Endothelial cell of umbilical vein (primary cell): ENCODE measurements at regions of chr7 and their contacts with region 1.

Region 1: GRCh38 chr7:66493235-66494181 is 135.2 kb upstream of the KCTD7 start:
- DNase-seq: peak; percentile 98
- H3K4me3 ChIP-seq: peak overlapping the region; percentile 19 to 69 (median 60)
- H3K27ac ChIP-seq: peak overlapping the region; percentile 78
- H3K4me1 ChIP-seq: peaks cover 4% of the 10 kb centered on the region
- H3K27me3 ChIP-seq: no peaks in the 10 kb centered on the region
- CTCF ChIP-seq: peak in 1 of 2 donors; percentile 43
- POLR2A ChIP-seq: peak; percentile 97

Region 2: GRCh38 chr7:66075590-66076461 is 417.7 kb before region 1 on chr7 and contains the start of gene ASL:
- CTCF ChIA-PET with region 1: no interaction called
- POLR2A ChIA-PET with region 1: no interaction called
- dilution Hi-C with region 1: no loop called
- intact Hi-C with region 1: loop called (anchors 1 kb)
- DNase-seq: peak; percentile 93
- H3K4me3 ChIP-seq: peak within 1 kb of the TSS; percentile 59 to 88 (median 75)
- H3K27ac ChIP-seq: peak within 1 kb of the TSS; percentile 61
- H3K4me1 ChIP-seq: peaks cover 11% of the 10 kb centered on the region
- H3K27me3 ChIP-seq: no peaks in the 10 kb centered on the region
- CTCF ChIP-seq: no peak
- POLR2A ChIP-seq: peak; percentile 86
- total RNA-seq, gene ASL: 48.4 and 50.5 TPM in 2 replicates

Region 3: GRCh38 chr7:66114793-66115649 is 378.5 kb before region 1 on chr7 and contains the start of gene CRCP:
- CTCF ChIA-PET with region 1: no interaction called
- POLR2A ChIA-PET with region 1: no interaction called
- dilution Hi-C with region 1: no loop called
- intact Hi-C with region 1: loop called (anchors 10 kb)
- DNase-seq: peak; percentile 84
- H3K4me3 ChIP-seq: peak within 1 kb of the TSS; percentile 74 to 88 (median 87)
- H3K27ac ChIP-seq: peak within 1 kb of the TSS; percentile 73
- H3K4me1 ChIP-seq: peaks cover 10% of the 10 kb centered on the region
- H3K27me3 ChIP-seq: no peaks in the 10 kb centered on the region
- CTCF ChIP-seq: peak; percentile 32 to 50
- POLR2A ChIP-seq: peak; percentile 79
- total RNA-seq, gene CRCP: 20.3 and 29.7 TPM in 2 replicates

Region 4: DNA sequence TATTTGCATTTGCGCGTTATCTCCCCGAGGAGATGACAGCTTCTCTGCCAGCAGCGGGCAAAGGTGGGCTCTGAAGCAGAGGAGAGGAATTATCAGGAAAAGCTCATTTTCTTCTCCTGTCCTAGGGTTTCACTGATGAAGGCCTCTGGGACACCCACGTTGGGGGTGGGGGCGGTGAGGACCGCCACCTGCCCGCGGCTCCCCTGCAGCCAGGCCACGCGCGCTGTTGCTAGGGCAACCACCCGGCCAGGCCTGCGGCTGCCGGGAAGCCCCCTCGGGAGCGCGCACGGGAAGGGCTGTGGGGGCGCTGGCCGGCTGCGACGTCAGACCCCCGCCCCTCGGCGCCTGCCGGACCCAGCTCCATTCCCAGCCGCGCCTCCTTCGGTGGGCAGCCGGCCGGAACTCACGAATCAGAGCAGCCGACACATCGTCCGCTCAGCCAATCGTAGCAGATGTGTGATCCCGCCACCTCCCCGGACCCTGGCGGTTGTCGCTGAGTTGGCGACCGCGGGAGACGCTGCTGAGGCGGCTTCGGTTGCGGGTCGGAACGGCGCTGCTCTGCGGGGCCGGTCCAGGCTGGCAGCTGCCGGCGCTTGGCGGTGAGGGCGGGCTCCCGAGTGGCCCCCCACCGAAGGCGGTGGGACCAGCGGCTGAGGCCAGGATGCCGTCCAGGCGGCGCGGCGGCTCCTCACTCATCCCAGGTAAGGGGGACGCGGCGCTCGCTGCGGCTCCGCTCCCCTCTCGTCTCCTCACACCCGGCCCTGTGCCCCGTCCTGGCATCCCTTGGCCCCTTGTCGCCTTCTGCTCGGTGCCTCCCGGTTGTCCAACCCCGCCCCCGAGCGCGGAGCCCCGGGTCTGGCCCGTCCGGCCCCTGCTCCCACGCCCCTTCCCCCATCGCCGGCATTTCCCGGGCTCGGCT is 288.4 kb before region 1 on chr7 and contains the start of gene TPST1:
- CTCF ChIA-PET with region 1: interaction called, 9 read pairs
- POLR2A ChIA-PET with region 1: no interaction called
- dilution Hi-C with region 1: no loop called
- intact Hi-C with region 1: loop called (anchors 10 kb)
- DNase-seq: peak; percentile 97
- H3K4me3 ChIP-seq: peak within 1 kb of the TSS; percentile 70 to 71 (median 71)
- H3K27ac ChIP-seq: peak within 1 kb of the TSS; percentile 26
- H3K4me1 ChIP-seq: peaks cover 9% of the 10 kb centered on the region
- H3K27me3 ChIP-seq: no peaks in the 10 kb centered on the region
- CTCF ChIP-seq: peak; percentile 48 to 78
- POLR2A ChIP-seq: peak; percentile 93
- total RNA-seq, gene TPST1: 18.7 and 19.1 TPM in 2 replicates

Region 5: GRCh38 chr7:66304536-66304935 is 189.0 kb before region 1 on chr7:
- CTCF ChIA-PET with region 1: no interaction called
- POLR2A ChIA-PET with region 1: no interaction called
- dilution Hi-C with region 1: no loop called
- intact Hi-C with region 1: loop called (anchors 1 kb)
- DNase-seq: peak; percentile 88
- H3K4me3 ChIP-seq: peak overlapping the region in 1 of 3 experiments; percentile 19
- H3K27ac ChIP-seq: peak overlapping the region; percentile 94
- H3K4me1 ChIP-seq: peaks cover 49% of the 10 kb centered on the region
- H3K27me3 ChIP-seq: no peaks in the 10 kb centered on the region
- CTCF ChIP-seq: no peak
- POLR2A ChIP-seq: peak; percentile 35

Region 6: GRCh38 chr7:66399566-66399965 is 93.9 kb before region 1 on chr7:
- CTCF ChIA-PET with region 1: no interaction called
- POLR2A ChIA-PET with region 1: no interaction called
- dilution Hi-C with region 1: no loop called
- intact Hi-C with region 1: no loop called
- DNase-seq: no peak
- H3K4me3 ChIP-seq: no peak overlapping the region
- H3K27ac ChIP-seq: no peak overlapping the region
- H3K4me1 ChIP-seq: peaks cover 9% of the 10 kb centered on the region
- H3K27me3 ChIP-seq: no peaks in the 10 kb centered on the region
- CTCF ChIP-seq: no peak
- POLR2A ChIP-seq: no peak

Region 7: DNA sequence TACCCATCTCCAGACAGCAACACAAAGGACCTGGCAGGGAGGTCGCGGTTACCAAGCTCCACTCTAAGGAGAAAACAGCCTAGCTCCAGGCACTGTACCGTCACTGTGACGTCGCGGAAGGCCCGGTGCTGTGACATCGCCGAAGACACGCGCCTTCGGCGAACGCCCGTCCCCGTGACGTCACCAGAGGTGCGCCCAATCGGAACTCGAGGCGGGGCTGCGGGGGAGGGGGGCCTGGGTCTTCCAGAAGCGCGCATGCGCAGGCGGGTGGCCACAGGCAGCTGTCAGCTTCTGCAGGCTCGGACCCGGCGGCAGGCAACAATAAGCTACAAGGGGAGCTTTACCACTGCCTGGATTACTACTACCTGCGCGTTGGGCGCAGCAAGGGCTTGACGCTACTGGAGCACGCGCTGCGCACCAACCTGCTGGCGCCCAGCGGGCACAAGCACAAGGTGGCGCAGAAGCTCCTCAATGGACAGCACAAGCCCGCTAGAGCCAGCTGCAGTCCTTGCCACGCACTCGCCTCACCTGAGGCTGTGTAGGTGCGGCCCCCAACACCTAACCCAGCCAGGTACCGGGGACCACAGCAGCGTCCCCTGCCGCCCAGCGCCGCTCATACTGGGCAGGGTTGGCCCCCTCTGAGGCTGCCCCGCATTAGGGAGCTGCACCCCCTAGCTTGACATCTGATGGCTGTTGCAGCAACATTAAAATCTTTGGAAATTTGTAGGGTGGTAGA is 80.0 kb before region 1 on chr7:
- CTCF ChIA-PET with region 1: interaction called, 13 read pairs
- POLR2A ChIA-PET with region 1: interaction called, 4 read pairs
- dilution Hi-C with region 1: no loop called
- intact Hi-C with region 1: loop called (anchors 1 kb)
- DNase-seq: peak; percentile 87
- H3K4me3 ChIP-seq: peak overlapping the region in 2 of 3 experiments; percentile 33 to 47
- H3K27ac ChIP-seq: peak overlapping the region; percentile 29
- H3K4me1 ChIP-seq: peaks cover 7% of the 10 kb centered on the region
- H3K27me3 ChIP-seq: no peaks in the 10 kb centered on the region
- CTCF ChIP-seq: peak; percentile 52 to 65
- POLR2A ChIP-seq: no peak

Region 8: GRCh38 chr7:66549466-66549865 is 56.0 kb after region 1 on chr7:
- CTCF ChIA-PET with region 1: no interaction called
- POLR2A ChIA-PET with region 1: no interaction called
- dilution Hi-C with region 1: no loop called
- intact Hi-C with region 1: no loop called
- DNase-seq: no peak
- H3K4me3 ChIP-seq: no peak overlapping the region
- H3K27ac ChIP-seq: no peak overlapping the region
- H3K4me1 ChIP-seq: no peaks in the 10 kb centered on the region
- H3K27me3 ChIP-seq: no peaks in the 10 kb centered on the region
- CTCF ChIP-seq: no peak
- POLR2A ChIP-seq: no peak

Region 9: DNA sequence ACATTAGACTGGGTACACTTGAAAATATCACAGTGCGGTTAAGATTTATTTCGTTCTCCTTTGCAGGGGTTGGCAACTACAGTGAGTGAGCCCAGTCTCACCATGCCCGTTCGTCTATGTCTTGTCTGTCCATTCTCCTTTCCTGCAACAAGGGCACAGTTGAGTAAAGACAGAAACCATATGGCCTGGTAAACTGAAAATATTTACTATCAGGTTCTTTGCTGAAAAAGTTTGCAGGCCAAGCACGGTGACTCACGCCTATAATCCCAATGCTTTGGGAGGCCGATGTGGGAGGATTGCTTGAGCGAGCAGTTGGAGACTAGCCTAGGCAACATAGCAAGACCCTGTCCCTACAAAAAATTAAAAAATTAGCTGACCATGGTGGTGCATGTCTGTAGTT is 123.8 kb after region 1 on chr7:
- CTCF ChIA-PET with region 1: no interaction called
- POLR2A ChIA-PET with region 1: no interaction called
- dilution Hi-C with region 1: no loop called
- intact Hi-C with region 1: no loop called
- DNase-seq: no peak
- H3K4me3 ChIP-seq: no peak overlapping the region
- H3K27ac ChIP-seq: no peak overlapping the region
- H3K4me1 ChIP-seq: no peaks in the 10 kb centered on the region
- H3K27me3 ChIP-seq: peaks cover 0 to 3% of the 10 kb centered on the region in 2 experiments
- CTCF ChIP-seq: no peak
- POLR2A ChIP-seq: no peak